ENCODE measurements at regions of chr3 and their contacts with region 1.

Region 1: GRCh38 chr3:193772422-193772763 is 179.4 kb downstream of the OPA1 start:
- DNase-seq: no peak
- H3K4me3 ChIP-seq: no peak overlapping the region
- H3K27ac ChIP-seq: no peak overlapping the region
- H3K4me1 ChIP-seq: no peaks in the 10 kb centered on the region
- H3K27me3 ChIP-seq: no peaks in the 10 kb centered on the region
- CTCF ChIP-seq: no peak
- EP300 ChIP-seq: no peak
- POLR2A ChIP-seq: no peak

Region 2: DNA sequence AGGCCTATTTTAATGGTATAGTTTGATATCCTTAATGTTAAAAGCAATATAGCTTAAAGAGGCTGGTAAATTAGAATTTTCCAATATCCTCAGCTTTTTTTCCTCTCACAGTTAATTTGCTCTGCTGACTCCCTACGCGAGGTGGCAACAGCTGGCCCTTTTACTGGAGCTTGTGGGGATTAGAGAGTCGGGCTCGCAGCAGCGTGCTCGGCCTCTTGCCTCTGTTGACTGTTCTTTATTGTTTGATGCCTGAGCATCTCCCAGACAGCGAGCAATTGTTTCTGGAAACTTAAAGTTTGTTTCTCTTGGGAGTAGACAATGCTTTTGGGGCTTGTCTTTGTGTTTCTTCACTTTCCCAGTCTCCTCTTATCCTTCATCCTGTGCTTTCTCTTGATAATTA is 98.5 kb before region 1 on chr3:
- intact Hi-C with region 1: loop called in 1 of 4 experiments (anchors 10 kb)
- DNase-seq: no peak
- H3K4me3 ChIP-seq: no peak overlapping the region
- H3K27ac ChIP-seq: no peak overlapping the region
- H3K4me1 ChIP-seq: no peaks in the 10 kb centered on the region
- H3K27me3 ChIP-seq: no peaks in the 10 kb centered on the region
- CTCF ChIP-seq: no peak
- EP300 ChIP-seq: no peak
- POLR2A ChIP-seq: no peak

Measured in ovary (tissue), 10 donors.